Heart right ventricle (tissue), 16 donors: ENCODE measurements at regions of chr11 and their contacts with region 1.

Region 1: GRCh38 chr11:116579857-116580727 is 192.7 kb downstream of the BUD13 start:
- DNase-seq: no peak
- ATAC-seq: peak in 1 of 8 donors; percentile 31
- H3K4me3 ChIP-seq: peak overlapping the region in 5 of 10 donors; percentile 5 to 13 (median 9)
- H3K27ac ChIP-seq: no peak overlapping the region
- H3K4me1 ChIP-seq: peaks cover 0 to 17% (median 10%) of the 10 kb centered on the region in 9 donors
- H3K27me3 ChIP-seq: peaks cover 13 to 73% (median 60%) of the 10 kb centered on the region in 7 donors
- CTCF ChIP-seq: no peak

Region 2: GRCh38 chr11:117621226-117621625 is 1041.1 kb after region 1 on chr11:
- intact Hi-C with region 1: loop called in 1 of 10 experiments (anchors 5 kb)
- DNase-seq: no peak
- ATAC-seq: no peak
- H3K4me3 ChIP-seq: no peak overlapping the region
- H3K27ac ChIP-seq: no peak overlapping the region
- H3K4me1 ChIP-seq: peaks cover 0 to 12% (median 0%) of the 10 kb centered on the region in 9 donors
- H3K27me3 ChIP-seq: no peaks in the 10 kb centered on the region
- CTCF ChIP-seq: peak in 7 of 9 donors; percentile 21 to 52 (median 33)